RWPE1 (cell line): ENCODE measurements at regions of chr12 and their contacts with region 1.

Region 1: GRCh38 chr12:6285063-6285477 is 25.4 kb upstream of the PLEKHG6 start:
- DNase-seq: peak; percentile 85
- H3K27ac ChIP-seq: peak overlapping the region; percentile 69; the same call in 1 of the 2 replicates
- CTCF ChIP-seq: peak; percentile 71

Region 2: GRCh38 chr12:6062757-6063735 is 222.0 kb before region 1 on chr12:
- CTCF ChIA-PET with region 1: interaction called, 10 read pairs
- POLR2A ChIA-PET with region 1: no interaction called
- DNase-seq: peak; percentile 68
- H3K27ac ChIP-seq: no peak overlapping the region
- CTCF ChIP-seq: peak; percentile 74

Region 3: DNA sequence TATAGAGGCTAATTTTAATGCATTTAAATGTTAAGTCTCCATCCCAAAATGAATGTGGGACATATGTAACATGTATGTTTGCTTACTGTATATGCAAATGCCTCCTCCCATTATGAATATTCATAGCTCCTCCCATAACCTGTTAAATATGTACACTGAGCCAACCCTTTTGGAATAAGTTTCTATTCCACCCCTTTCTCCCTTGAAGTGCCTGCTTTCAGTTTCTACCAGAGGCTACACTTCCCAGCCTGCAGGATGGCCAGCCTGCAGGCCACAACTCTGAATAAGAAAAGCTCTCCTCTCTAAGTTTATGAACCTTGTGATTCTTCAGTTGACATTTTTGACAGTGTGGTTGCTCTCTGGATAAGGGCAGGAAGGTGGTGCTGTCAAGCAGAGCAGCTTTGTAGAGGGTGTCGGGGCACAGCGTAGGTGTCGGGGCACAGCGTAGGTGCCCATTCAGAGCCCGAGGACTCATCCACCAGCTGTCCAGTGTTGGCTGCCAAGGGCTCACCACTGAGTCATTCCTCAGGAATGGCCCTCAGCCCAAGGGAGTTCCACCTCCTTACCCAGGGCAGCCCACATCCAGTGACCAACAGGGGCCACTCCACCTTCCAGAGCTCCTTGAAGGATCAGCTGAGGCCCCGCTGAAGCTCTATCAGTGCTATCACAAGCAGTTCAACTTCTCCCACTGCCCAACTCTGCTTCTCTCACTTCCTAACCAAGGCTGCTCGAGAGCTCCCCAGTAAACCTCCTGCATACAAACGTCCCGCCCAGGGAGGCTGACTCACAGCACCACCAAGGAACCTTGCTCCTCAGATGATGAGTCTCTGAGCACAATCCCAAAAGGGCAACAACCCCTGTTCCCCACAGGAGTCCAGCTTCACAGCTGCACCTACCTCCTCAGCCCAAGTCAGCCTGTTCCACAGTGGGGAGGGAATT is 192.0 kb before region 1 on chr12:
- CTCF ChIA-PET with region 1: interaction called, 12 read pairs
- POLR2A ChIA-PET with region 1: no interaction called
- DNase-seq: peak; percentile 85
- H3K27ac ChIP-seq: peak overlapping the region; percentile 78
- CTCF ChIP-seq: no peak

Region 4: DNA sequence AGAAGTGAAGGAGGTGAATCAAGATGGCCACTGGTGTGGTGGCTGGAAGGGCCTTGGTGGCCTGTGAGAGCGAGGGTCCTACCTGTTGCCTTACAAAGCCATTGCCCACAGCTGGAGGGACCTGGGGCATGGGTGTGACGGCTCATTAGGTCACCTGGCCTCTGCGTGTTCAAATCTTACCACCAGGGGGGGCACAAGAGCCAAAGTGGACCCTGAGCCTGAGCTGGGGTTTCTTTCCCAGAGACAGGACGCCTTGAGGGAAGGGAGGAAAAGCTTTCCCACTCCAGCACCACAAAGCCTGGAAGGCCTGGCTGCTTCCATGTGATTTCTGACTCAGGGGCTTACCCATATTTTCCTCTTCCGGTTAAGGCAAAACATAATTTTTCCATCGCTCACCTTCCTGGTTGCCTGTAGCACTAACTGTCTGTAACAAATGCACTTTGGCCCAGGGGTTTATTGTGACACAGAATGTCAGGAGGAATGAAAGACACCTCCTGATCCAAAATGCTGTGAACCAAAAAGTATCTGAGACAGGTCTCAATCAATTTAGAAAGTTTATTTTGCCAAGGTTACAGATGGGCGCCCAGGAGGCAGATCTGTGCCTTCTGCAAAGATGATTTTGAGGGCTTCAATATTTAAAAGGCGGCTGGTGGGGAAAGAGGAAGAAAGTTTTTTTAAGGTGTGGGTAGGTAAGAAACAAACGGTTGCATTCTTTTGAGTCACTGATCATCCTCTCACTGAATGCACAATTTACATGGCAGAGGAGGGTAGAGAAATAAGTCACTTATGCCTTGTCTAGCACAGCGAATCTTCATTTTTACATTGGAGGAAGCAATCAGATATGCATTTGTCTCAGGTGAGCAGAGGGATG is 89.2 kb before region 1 on chr12:
- CTCF ChIA-PET with region 1: interaction called, 28 read pairs
- POLR2A ChIA-PET with region 1: interaction called, 11 read pairs
- DNase-seq: peak; percentile 93
- H3K27ac ChIP-seq: peak overlapping the region; percentile 67
- CTCF ChIP-seq: peak; percentile 73